ENCODE measurements at regions of chr2 and their contacts with region 1.

Region 1: DNA sequence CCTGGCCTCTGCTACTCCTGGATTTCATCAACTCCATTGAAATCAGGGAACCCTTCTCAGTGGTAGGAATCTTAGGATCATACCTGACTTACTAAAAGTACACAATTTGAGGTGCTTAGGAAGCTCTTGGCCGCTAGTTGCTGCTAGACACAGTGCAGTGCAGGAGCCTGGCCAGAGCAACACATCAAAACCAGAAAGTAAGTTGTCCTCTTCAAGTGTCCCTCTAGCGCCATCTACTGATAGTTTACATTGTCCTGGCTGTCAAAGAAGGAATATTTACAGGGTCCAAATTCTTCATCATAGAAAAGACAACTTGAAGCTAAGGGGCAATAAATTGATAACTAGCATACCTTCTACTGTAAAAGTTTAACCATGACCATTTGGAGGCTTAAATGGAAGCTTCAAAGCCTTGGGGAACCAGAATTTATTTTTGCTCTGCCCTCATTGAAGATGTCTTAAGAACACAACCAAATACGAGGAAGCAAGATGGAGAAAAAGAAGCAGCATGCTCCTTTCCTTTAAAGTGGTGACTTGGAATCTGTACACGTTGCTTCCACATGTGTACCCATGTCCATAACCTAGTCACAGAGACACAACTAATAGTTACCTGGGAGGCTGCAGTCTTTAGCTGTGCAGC is 889.1 kb upstream of the GCFC2 start:
- DNase-seq: peak; percentile 13 to 93 (median 46)

Region 2: DNA sequence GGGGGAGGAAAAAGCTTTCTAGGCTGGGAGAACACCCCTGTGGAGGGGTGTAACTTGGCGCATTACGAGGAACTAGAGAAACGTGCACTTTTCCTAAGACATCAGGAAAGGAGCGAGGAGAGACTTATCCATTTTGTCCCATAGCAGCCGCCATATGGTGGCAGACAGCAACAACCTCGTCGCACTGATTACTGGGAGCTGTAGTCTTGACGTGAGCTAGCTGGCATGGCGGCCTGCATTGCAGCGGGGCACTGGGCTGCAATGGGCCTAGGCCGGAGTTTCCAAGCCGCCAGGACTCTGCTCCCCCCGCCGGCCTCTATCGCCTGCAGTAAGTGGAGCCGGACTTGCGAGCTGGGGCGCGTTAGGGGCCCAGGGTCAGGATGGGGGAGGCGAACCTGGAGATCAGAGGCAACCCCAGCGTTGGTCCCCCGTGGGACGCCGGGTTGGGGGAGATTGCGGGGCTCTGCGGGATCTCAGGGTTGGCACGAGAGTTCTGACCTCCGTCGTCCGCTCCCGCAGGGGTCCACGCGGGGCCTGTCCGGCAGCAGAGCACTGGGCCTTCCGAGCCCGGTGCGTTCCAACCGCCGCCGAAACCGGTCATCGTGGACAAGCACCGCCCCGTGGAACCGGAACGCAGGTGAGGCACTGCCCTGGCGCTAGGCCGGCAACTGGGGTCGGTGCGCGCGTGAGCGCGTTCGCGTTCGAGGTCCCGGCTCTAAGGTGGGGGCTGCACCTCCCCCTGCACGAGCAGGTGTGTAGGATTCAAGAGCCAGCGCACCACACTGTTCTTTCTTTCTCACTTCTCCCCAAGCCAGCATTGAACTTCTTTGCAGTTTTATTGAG is 953.0 kb before region 1 on chr2 and contains the start of gene MRPL19:
- intact Hi-C with region 1: loop called (anchors 10 kb)
- DNase-seq: peak; percentile 83 to 97 (median 88)

Region 3: DNA sequence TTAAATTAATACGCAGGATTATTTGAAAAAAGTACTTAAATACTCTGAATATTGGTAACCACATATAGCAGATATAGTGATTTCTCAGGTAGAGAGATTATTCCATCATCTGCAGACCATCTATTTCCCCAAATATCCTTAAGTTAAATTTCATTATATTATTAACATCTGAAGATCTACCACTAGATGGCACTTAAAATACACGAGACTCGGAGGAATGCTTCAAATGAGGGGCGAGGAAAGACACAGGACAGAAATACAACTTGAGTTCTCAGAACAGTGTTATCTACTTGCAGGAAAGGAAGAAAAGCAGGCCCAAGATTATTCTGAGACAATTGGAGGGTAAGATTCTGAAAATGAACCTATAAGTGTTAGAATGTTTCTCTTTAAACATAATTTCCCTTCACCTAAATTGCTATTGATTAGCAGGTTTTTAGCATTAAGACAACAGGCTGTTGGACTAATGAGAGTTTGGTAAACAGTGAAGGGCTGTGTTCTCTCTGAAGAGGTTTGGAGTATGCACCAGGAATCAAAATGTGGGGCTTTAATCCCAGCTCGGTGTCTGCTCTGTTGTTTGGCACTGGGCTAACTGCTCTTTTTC is 812.2 kb before region 1 on chr2:
- intact Hi-C with region 1: loop called (anchors 1 kb)
- DNase-seq: no peak

Region 4: DNA sequence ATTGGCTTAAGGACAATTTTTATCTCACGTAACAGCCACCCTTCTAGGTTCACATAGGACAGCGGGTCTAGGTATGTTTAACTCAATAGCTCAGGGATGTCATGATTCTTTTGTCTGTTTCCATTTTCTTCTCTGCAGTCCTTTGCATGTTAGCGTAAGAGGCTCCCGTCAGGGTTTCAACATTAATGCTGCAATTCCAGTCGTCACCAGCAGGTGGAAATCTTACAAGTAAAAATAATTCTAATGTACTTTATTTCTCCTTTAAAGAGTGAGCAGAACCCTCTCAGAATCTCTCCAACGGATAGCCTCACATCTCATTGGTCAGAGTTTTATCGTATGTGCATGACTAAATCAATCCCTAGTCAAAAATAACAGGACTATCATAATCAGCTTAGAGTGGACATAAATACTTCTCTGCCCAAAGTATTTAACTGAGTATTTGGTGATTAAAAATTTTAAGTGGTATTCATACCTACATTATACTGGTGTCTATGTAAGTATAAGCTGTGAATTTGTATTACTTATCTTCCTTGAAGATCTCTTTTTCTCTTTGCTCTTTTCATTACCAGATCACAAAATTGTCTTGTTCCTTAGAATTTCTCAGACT is 401.9 kb before region 1 on chr2:
- intact Hi-C with region 1: loop called (anchors 5 kb)
- DNase-seq: peak in 3 of 10 donors; percentile 20 to 57 (median 56)

Region 5: GRCh38 chr2:76415821-76416220 is 184.0 kb before region 1 on chr2:
- intact Hi-C with region 1: no loop called
- DNase-seq: peak in 1 of 10 donors; percentile 30

Measured in posterior cingulate gyrus (tissue), 11 donors.